ENCODE measurements at regions of chr1 and their contacts with region 1.

Region 1: DNA sequence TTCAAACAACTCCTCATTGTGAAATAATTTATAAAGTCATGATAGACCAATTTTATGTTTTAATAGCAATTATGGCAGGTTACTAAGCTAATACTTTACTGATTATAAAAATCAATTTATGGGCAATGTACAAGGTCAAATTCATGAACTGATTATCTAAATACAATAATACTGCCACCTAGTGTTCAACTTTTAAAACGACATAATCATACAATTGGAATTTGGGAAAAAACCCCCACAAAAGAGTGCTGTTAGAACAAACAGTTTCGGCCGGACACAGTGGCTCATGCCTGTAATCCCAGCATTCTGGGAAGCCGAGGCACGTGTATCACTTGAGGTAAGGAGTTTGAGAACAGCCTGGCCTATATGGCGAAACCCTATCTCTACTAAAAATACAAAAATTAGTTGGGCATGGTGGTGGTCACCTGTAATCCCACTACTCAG is 14.0 kb downstream of the GTF2B start:
- DNase-seq: peak; percentile 46
- H3K4me3 ChIP-seq: no peak overlapping the region
- H3K27ac ChIP-seq: no peak overlapping the region
- H3K4me1 ChIP-seq: no peaks in the 10 kb centered on the region
- H3K27me3 ChIP-seq: no peaks in the 10 kb centered on the region
- CTCF ChIP-seq: peak; percentile 14 to 25
- POLR2A ChIP-seq: no peak

Region 2: GRCh38 chr1:87556326-87556725 is 1321.1 kb before region 1 on chr1:
- CTCF ChIA-PET with region 1: no interaction called
- POLR2A ChIA-PET with region 1: no interaction called
- dilution Hi-C with region 1: no loop called
- intact Hi-C with region 1: no loop called
- DNase-seq: no peak
- H3K4me3 ChIP-seq: no peak overlapping the region
- H3K27ac ChIP-seq: no peak overlapping the region
- H3K4me1 ChIP-seq: no peaks in the 10 kb centered on the region
- H3K27me3 ChIP-seq: no peaks in the 10 kb centered on the region
- CTCF ChIP-seq: no peak
- POLR2A ChIP-seq: no peak

Region 3: DNA sequence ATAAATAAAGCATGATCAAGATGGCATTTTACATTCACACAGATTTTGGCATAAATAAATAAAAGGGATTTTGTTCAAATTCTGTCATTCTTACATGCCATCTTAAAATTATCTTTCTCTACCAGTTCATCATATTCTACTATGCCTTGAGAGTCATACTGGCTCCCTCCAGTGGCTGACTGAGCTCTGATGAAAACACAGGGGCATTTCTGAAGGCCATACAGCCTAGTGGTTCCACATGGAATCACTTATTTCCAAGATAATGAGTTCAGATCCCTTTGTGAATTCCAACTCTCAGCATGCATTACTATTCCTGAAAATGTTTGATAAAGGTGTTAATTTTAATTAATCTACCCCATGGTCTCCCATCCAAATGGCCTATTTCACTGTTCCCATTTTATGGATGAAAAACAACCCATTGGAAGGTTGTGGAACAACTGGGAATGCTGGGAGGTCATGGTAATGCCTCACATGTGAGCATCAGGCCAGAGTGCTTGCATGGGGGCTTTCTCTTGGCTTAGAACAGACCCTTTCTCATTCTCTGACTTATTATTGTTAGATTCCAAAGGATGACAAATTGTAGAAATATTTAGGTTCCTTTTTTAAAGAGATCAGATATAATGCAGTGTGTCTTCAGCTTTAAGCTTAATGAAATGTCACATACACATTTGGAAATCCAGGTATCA is 815.8 kb before region 1 on chr1:
- CTCF ChIA-PET with region 1: no interaction called
- POLR2A ChIA-PET with region 1: no interaction called
- dilution Hi-C with region 1: no loop called
- intact Hi-C with region 1: no loop called
- DNase-seq: peak; percentile 59
- H3K4me3 ChIP-seq: no peak overlapping the region
- H3K27ac ChIP-seq: no peak overlapping the region
- H3K4me1 ChIP-seq: peaks cover 6% of the 10 kb centered on the region
- H3K27me3 ChIP-seq: no peaks in the 10 kb centered on the region
- CTCF ChIP-seq: peak; percentile 65 to 67
- POLR2A ChIP-seq: no peak

Region 4: GRCh38 chr1:88608139-88608943 is 269.1 kb before region 1 on chr1:
- CTCF ChIA-PET with region 1: interaction called, 10 read pairs
- POLR2A ChIA-PET with region 1: no interaction called
- dilution Hi-C with region 1: no loop called
- intact Hi-C with region 1: loop called (anchors 2 kb)
- DNase-seq: peak; percentile 49
- H3K4me3 ChIP-seq: no peak overlapping the region
- H3K27ac ChIP-seq: no peak overlapping the region
- H3K4me1 ChIP-seq: no peaks in the 10 kb centered on the region
- H3K27me3 ChIP-seq: peaks cover 0 to 3% of the 10 kb centered on the region in 2 experiments
- CTCF ChIP-seq: peak; percentile 36 to 46
- POLR2A ChIP-seq: no peak

Region 5: DNA sequence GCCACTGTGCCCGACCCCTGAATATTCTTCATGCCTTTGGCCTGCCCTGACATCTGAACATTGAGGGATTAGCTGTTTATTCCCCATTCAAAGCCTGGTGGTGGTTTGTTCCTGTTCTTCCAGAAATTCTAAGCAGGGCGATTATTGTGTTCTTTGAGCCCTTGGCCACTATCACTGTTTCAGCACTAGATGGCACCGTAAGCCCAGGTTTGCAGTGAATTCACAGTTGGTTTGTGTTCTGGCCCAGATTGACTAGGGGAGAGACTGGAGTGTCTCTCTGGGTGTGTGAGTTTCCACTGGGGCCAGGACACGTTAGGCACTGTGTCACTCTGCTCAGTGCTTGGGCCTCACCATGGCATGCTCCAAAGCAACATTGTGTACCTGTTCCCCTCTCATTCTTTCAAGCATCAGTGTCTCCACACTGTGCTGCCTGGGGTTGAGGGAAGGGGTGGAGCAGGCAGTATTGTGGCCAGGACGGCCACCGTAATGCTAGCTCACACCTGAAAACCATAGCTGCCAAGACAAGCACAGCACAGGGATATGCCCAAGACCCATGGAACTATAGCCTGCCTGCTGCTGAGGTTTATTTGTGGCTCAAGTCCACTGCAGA is 140.7 kb before region 1 on chr1:
- CTCF ChIA-PET with region 1: interaction called, 16 read pairs
- POLR2A ChIA-PET with region 1: no interaction called
- dilution Hi-C with region 1: no loop called
- intact Hi-C with region 1: loop called (anchors 1 kb)
- DNase-seq: peak; percentile 31
- H3K4me3 ChIP-seq: no peak overlapping the region
- H3K27ac ChIP-seq: no peak overlapping the region
- H3K4me1 ChIP-seq: peaks cover 5% of the 10 kb centered on the region
- H3K27me3 ChIP-seq: no peaks in the 10 kb centered on the region
- CTCF ChIP-seq: peak; percentile 56 to 69
- POLR2A ChIP-seq: no peak

Region 6: GRCh38 chr1:88800382-88801051 is 76.9 kb before region 1 on chr1:
- CTCF ChIA-PET with region 1: no interaction called
- POLR2A ChIA-PET with region 1: no interaction called
- dilution Hi-C with region 1: no loop called
- intact Hi-C with region 1: loop called (anchors 2 kb)
- DNase-seq: peak; percentile 24
- H3K4me3 ChIP-seq: no peak overlapping the region
- H3K27ac ChIP-seq: no peak overlapping the region
- H3K4me1 ChIP-seq: peaks cover 3% of the 10 kb centered on the region
- H3K27me3 ChIP-seq: no peaks in the 10 kb centered on the region
- CTCF ChIP-seq: peak; percentile 54 to 57
- POLR2A ChIP-seq: no peak

Region 7: DNA sequence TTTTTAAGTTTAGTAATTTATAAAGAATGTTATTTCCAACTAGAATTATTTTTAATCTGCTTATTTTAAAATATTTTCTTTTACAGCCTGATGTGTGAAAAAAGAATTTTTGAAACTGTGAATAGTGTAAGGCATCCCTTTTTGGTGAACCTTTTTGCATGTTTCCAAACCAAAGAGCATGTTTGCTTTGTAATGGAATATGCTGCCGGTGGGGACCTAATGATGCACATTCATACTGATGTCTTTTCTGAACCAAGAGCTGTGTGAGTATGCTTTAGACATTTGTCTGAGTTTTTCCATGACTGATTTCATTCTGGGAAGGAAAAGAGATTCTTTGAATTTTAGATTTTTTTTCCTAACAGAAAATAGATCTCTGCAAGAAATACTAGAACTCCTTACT is 63.9 kb before region 1 on chr1:
- CTCF ChIA-PET with region 1: no interaction called
- POLR2A ChIA-PET with region 1: no interaction called
- dilution Hi-C with region 1: no loop called
- intact Hi-C with region 1: no loop called
- DNase-seq: no peak
- H3K4me3 ChIP-seq: no peak overlapping the region
- H3K27ac ChIP-seq: no peak overlapping the region
- H3K4me1 ChIP-seq: no peaks in the 10 kb centered on the region
- H3K27me3 ChIP-seq: no peaks in the 10 kb centered on the region
- CTCF ChIP-seq: no peak
- POLR2A ChIP-seq: no peak